ENCODE measurements at regions of chr5 and their contacts with region 1.

Region 1: DNA sequence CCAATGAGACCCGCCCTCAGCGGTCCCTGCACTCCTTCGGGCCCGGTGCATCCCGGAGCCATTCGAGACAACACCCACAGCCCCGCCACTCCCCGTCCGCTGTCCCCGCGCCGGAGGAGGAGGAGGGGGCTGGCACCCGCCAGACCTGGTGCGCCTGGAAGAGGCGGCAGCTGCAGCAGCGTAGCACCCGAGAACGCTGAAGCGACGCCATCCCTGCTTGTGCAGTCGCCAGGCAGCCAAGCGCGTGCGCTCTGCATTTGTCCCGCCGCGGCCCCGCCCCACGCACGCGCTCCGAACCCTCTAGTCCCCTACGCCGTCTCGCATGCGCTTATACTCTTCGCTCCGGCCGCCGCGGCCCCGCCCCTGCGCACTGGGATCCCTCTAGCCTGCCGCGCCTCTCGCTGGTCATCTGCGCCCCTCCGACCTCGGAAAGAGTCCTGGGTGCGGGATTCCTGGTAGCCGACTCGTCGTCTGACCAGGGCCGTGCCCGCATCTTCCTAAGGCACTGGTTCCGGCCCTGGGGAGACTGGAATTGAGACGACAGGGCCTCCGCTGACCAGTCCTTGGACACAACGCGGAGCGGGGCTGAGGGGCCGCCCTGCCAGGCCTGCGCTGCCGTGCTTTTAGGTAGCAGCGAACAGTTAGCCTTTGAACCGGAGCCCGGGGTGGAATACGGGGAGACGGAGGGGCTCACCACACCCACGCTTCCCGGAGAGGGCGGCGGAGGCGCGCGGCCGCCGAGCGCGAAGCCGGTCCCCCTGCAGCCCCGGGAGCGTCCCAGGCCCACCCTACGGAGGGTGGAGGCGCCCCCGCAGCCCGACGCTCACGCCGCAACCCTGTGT is at the start of gene MRNIP:
- DNase-seq: peak; percentile 92
- ATAC-seq: peak; percentile 94
- H3K4me3 Mint-ChIP-seq: peak within 1 kb of the TSS; percentile 96
- H3K27ac Mint-ChIP-seq: peak within 1 kb of the TSS; percentile 89
- H3K4me1 Mint-ChIP-seq: peaks cover 33% of the 10 kb centered on the region
- H3K27me3 Mint-ChIP-seq: no peaks in the 10 kb centered on the region
- CTCF ChIP-seq: no peak
- total RNA-seq, gene MRNIP: 54.6 and 70.0 TPM in 2 replicates

Region 2: GRCh38 chr5:179550511-179551230 is 308.1 kb before region 1 on chr5 and contains the start of gene RUFY1:
- CTCF ChIA-PET with region 1: no interaction called
- POLR2A ChIA-PET with region 1: no interaction called
- intact Hi-C with region 1: loop called (anchors 2 kb)
- DNase-seq: peak; percentile 91
- ATAC-seq: peak; percentile 70
- H3K4me3 Mint-ChIP-seq: peak within 1 kb of the TSS; percentile 97
- H3K27ac Mint-ChIP-seq: peak within 1 kb of the TSS; percentile 100
- H3K4me1 Mint-ChIP-seq: peaks cover 60% of the 10 kb centered on the region
- H3K27me3 Mint-ChIP-seq: no peaks in the 10 kb centered on the region
- CTCF ChIP-seq: no peak
- total RNA-seq, gene RUFY1: 83.0 and 95.8 TPM in 2 replicates

Region 3: DNA sequence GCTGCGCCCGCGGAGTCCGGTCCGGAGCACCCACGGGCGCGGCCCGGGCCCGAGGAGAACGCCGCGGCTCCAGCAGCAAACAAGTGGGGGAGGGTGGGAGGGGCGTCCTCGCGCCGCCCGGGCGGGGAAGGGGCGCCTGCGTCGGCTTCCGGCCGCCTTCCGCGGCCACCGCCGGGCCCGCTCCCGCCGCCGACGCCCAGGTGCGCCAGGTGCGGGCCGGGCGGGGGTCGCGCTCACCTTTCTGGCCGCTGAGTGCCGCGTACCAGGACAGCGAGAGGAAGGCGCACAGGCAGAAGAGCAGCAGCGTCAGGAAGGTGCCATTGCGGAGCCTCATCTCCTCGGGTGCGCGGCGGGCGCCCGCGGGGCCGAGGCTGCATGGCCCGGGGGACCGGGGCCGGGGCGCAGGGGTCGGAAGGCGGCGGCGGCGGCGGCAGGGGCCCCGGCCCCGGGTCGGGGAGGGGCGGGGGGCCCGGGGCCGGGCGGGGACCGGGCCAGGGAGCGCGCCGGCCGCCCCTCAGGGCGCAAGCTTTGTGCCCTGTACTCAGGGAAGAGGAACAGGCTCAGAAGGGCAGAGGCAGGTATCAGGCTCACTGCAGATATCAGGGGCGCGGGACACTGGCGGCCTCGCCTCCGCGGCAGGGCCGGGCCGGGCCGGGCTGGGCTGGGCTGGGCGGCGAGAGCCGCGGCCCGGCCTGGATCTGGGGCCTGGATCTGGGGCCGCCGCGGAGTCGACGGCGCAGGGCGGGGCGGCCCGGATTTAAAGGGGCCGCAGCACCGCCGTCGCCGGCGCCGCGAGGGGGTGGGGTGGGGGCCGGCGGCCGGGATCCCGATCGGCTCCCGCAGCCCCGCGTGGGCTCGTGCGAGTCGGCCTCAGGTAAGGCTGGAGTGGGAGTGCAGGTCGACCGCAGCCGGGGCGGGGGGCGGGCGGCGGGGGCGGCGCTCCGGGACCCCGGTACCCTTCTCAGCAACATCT is 52.3 kb before region 1 on chr5 and contains the start of gene MGAT4B:
- CTCF ChIA-PET with region 1: interaction called, 8 read pairs
- POLR2A ChIA-PET with region 1: interaction called, 5 read pairs
- intact Hi-C with region 1: loop called (anchors 1 kb)
- DNase-seq: peak; percentile 69
- ATAC-seq: peak; percentile 79
- H3K4me3 Mint-ChIP-seq: peak within 1 kb of the TSS; percentile 79
- H3K27ac Mint-ChIP-seq: peak within 1 kb of the TSS; percentile 70
- H3K4me1 Mint-ChIP-seq: peaks cover 37% of the 10 kb centered on the region
- H3K27me3 Mint-ChIP-seq: no peaks in the 10 kb centered on the region
- CTCF ChIP-seq: no peak
- total RNA-seq, gene MGAT4B: 73.6 and 85.3 TPM in 2 replicates

Region 4: GRCh38 chr5:179907570-179908324 is 48.9 kb after region 1 on chr5 and contains the start of gene TBC1D9B:
- CTCF ChIA-PET with region 1: no interaction called
- POLR2A ChIA-PET with region 1: interaction called, 3 read pairs
- intact Hi-C with region 1: loop called (anchors 2 kb)
- DNase-seq: peak; percentile 74
- ATAC-seq: peak; percentile 90
- H3K4me3 Mint-ChIP-seq: peak within 1 kb of the TSS; percentile 87
- H3K27ac Mint-ChIP-seq: peak within 1 kb of the TSS; percentile 83
- H3K4me1 Mint-ChIP-seq: peaks cover 29% of the 10 kb centered on the region
- H3K27me3 Mint-ChIP-seq: no peaks in the 10 kb centered on the region
- CTCF ChIP-seq: no peak
- total RNA-seq, gene TBC1D9B: 111 and 117 TPM in 2 replicates

Region 5: GRCh38 chr5:180975338-180975737 is 1116.5 kb after region 1 on chr5:
- CTCF ChIA-PET with region 1: no interaction called
- POLR2A ChIA-PET with region 1: no interaction called
- intact Hi-C with region 1: loop called (anchors 10 kb)
- DNase-seq: peak; percentile 41
- ATAC-seq: peak; percentile 99
- H3K4me3 Mint-ChIP-seq: peak overlapping the region; percentile 47
- H3K27ac Mint-ChIP-seq: peak overlapping the region; percentile 81
- H3K4me1 Mint-ChIP-seq: peaks cover 40% of the 10 kb centered on the region
- H3K27me3 Mint-ChIP-seq: no peaks in the 10 kb centered on the region
- CTCF ChIP-seq: no peak